ENCODE measurements at regions of chr5 and their contacts with region 1.

Region 1: GRCh38 chr5:181204824-181205760 is at the start of gene TRIM7:
- DNase-seq: peak; percentile 69
- H3K27ac ChIP-seq: peak within 1 kb of the TSS; percentile 96
- CTCF ChIP-seq: no peak

Region 2: GRCh38 chr5:181043285-181044092 is 161.6 kb before region 1 on chr5:
- CTCF ChIA-PET with region 1: no interaction called
- POLR2A ChIA-PET with region 1: no interaction called
- DNase-seq: no peak
- H3K27ac ChIP-seq: no peak overlapping the region
- CTCF ChIP-seq: no peak

Region 3: GRCh38 chr5:181076920-181077319 is 128.2 kb before region 1 on chr5:
- CTCF ChIA-PET with region 1: no interaction called
- POLR2A ChIA-PET with region 1: no interaction called
- DNase-seq: no peak
- H3K27ac ChIP-seq: no peak overlapping the region
- CTCF ChIP-seq: no peak

Region 4: GRCh38 chr5:181100121-181101015 is 104.7 kb before region 1 on chr5:
- CTCF ChIA-PET with region 1: no interaction called
- POLR2A ChIA-PET with region 1: no interaction called
- DNase-seq: no peak
- H3K27ac ChIP-seq: no peak overlapping the region
- CTCF ChIP-seq: no peak

Region 5: GRCh38 chr5:181191529-181192394 is 13.3 kb before region 1 on chr5:
- CTCF ChIA-PET with region 1: interaction called, 10 read pairs
- POLR2A ChIA-PET with region 1: interaction called, 15 read pairs
- DNase-seq: peak; percentile 91
- H3K27ac ChIP-seq: peak overlapping the region; percentile 93
- CTCF ChIP-seq: no peak

Region 6: DNA sequence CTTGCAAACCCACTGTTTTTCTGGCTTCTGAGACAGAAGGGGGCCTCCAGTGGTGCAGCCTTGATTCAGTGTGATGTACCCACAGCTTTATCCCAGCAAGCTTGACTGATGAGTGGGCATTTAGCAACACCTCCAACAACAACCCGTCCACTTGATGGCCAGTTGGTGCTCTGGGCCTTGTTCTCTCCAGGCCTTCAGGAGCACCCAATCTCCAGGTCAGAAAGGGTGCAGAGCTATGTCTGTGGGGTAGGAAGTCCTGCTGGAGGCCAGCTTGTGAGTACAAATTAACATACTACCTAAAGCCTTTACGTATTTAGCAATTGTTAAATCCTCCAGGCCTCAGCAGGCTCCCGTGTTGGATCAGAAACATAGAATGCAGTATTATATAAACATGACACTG is 66.0 kb after region 1 on chr5:
- CTCF ChIA-PET with region 1: no interaction called
- POLR2A ChIA-PET with region 1: no interaction called
- DNase-seq: no peak
- H3K27ac ChIP-seq: no peak overlapping the region
- CTCF ChIP-seq: no peak

Measured in RWPE1 (cell line).